Endothelial cell of umbilical vein (primary cell): ENCODE measurements at regions of chr2 and their contacts with region 1.

Region 1: DNA sequence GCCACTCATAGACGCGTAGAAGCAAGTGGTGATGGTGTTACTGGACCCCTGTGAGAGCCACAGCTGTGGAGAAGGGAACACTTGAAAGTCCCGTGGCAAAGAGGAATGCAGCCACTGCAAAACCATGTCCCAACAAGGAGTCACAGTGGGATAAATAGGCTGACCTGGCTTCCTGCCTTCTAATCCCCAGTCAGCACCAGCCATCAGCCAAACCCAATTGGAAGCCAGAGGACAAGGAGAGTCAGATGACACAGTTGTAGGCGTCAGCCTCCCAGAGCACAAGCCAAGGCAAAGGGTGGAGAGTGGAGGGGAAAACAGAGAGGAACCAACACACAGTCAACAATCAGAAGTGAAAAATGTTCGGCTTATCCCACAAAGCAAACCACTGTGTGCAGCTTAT is 5.5 kb upstream of the CYBRD1 start:
- DNase-seq: no peak
- H3K4me3 ChIP-seq: no peak overlapping the region
- H3K27ac ChIP-seq: no peak overlapping the region
- H3K4me1 ChIP-seq: peaks cover 5% of the 10 kb centered on the region
- H3K27me3 ChIP-seq: peaks cover 0 to 5% of the 10 kb centered on the region in 2 experiments
- CTCF ChIP-seq: no peak
- POLR2A ChIP-seq: no peak

Region 2: DNA sequence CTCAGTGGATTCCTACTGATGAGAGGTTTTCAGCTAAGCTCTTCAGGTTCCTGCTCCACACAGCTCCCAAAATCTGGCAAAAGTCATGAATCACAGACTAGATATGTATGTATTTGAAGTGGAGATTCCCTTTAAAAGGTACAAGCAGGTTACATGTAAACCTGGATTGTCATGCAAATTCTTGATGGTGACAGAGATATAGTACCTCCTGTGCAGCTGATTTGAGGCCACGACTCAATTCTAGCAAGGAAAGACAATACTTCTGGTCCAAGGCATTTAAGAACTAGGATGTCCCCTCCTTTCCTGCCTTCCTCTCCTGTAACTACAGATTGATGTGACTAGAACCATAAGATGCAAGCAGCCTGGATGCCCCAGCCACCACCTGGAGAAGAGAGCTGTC is 532.7 kb before region 1 on chr2:
- CTCF ChIA-PET with region 1: no interaction called
- POLR2A ChIA-PET with region 1: interaction called, 12 read pairs
- dilution Hi-C with region 1: no loop called
- intact Hi-C with region 1: no loop called
- DNase-seq: no peak
- H3K4me3 ChIP-seq: no peak overlapping the region
- H3K27ac ChIP-seq: no peak overlapping the region
- H3K4me1 ChIP-seq: no peaks in the 10 kb centered on the region
- H3K27me3 ChIP-seq: no peaks in the 10 kb centered on the region
- CTCF ChIP-seq: no peak
- POLR2A ChIP-seq: no peak

Region 3: DNA sequence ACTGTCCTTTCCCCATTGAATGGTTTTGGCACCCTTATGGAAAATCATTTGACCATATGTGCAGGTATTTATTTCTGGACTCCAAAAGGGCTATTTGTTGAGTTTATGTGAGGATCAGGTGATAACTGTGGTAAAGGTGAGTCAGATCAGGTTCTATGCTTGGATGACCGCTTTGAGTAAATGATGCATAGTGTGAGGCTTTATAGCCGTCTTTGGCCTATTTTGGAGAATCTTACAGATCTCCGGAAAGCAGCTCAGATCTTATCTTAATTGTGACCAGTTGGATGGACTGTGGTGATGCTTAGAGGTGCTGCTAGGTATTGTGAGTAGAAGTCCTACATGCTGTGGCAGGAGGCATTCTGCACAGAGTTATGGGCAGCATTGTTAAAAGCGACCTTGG is 209.2 kb before region 1 on chr2:
- CTCF ChIA-PET with region 1: no interaction called
- POLR2A ChIA-PET with region 1: no interaction called
- dilution Hi-C with region 1: no loop called
- intact Hi-C with region 1: no loop called
- DNase-seq: no peak
- H3K4me3 ChIP-seq: no peak overlapping the region
- H3K27ac ChIP-seq: no peak overlapping the region
- H3K4me1 ChIP-seq: no peaks in the 10 kb centered on the region
- H3K27me3 ChIP-seq: no peaks in the 10 kb centered on the region
- CTCF ChIP-seq: no peak
- POLR2A ChIP-seq: no peak